Heart right ventricle (tissue), 16 donors: ENCODE measurements at regions of chr5 and their contacts with region 1.

Region 1: GRCh38 chr5:73215891-73216610 is 43.1 kb downstream of the TMEM174 start:
- DNase-seq: peak; percentile 58 to 77
- ATAC-seq: peak; percentile 97 to 99 (median 98)
- H3K4me3 ChIP-seq: peak overlapping the region; percentile 6 to 53 (median 40)
- H3K27ac ChIP-seq: no peak overlapping the region
- H3K4me1 ChIP-seq: peaks cover 0 to 14% (median 9%) of the 10 kb centered on the region in 9 donors
- H3K27me3 ChIP-seq: peaks cover 5 to 99% (median 96%) of the 10 kb centered on the region in 7 donors
- CTCF ChIP-seq: peak; percentile 54 to 88 (median 83)

Region 2: DNA sequence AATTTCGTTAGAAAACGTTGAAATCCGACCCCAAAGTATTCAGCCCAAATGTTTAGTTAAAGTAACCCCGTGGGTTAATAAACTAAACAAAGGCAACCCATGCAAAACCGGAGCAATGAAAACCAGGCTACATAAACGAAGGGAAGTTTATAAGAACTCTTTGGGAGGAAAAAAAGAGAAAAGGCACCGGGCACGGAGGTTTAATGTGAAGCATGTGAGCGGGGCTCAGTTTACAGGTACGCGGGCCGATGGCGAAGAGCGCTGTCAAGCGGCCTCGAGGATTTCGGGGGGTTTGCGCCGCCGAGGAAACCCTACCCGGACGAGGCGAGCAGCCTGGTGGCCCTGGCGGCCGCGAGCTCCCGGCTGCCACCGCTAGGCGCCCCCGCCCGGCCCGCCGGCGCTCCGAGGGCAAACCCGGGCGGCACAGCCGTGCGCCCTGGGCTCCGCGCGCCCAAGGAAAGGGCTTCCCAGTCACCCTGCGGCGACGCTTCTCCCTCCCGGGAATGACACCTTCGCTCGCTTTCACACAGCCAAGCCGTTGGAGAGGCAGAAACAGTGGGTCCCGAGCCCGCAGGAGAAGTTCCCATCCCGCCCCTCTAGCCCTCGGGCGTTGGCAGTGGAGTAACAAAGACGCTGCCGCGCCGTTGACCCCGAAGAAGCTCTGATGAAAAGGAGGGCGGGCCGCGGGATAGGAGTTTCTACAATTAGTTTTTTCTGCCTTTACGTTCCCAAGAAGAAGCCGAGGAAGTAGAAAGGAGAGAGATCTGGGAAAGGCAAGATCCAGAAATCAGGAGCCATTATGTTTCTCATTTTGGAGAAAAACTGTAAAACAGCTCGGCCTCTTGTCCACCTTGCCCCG is 83.0 kb after region 1 on chr5:
- intact Hi-C with region 1: loop called in 1 of 10 experiments (anchors 10 kb)
- DNase-seq: no peak
- ATAC-seq: peak in 1 of 8 donors; percentile 41
- H3K4me3 ChIP-seq: peak overlapping the region in 2 of 10 donors; percentile 10 to 12
- H3K27ac ChIP-seq: no peak overlapping the region
- H3K4me1 ChIP-seq: peaks cover 5 to 31% (median 22%) of the 10 kb centered on the region in 9 donors
- H3K27me3 ChIP-seq: peaks cover 41 to 100% (median 97%) of the 10 kb centered on the region in 7 donors
- CTCF ChIP-seq: peak in 1 of 9 donors; percentile 18

Region 3: DNA sequence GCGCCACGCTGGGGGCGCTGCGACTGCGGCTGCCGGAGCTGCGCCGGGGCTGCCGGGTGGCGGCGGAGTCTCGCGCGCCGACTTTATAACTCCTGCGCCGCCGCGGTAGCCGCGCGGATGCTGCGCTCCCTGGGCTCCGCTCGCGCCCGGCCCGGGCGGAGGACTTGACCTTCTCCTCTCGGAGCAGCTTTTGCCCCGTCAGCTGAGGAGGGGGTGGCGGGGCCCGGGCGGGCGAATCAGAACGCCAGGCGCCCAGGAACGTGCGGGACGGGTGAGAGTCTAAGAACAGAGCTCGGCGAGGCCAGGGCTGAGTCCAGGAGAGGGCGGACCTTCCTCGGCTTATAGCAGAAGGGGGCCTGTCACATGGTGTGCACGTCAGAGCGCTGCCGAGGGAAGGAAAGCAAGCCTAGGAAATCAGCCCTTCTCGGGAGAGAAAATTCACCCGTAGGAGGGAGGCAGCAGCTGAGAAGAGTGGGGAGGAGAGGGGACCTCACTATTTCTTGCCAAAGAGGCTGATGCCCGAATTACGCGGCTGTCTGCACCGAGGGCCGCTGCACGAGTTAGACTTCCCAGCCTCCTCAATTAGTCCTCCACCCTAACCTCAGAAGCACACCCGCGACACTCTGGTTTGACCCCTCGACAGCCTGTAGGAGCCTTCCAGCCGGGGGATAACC is 232.5 kb after region 1 on chr5 and contains the start of gene FOXD1:
- intact Hi-C with region 1: loop called in 8 of 10 experiments (anchors 2 to 10 kb)
- DNase-seq: peak; percentile 45 to 59
- ATAC-seq: peak; percentile 72 to 89 (median 79)
- H3K4me3 ChIP-seq: peak within 1 kb of the TSS; percentile 23 to 64 (median 46)
- H3K27ac ChIP-seq: peak within 1 kb of the TSS in 1 of 10 donors; percentile 50
- H3K4me1 ChIP-seq: peaks cover 7 to 47% (median 19%) of the 10 kb centered on the region in 9 donors
- H3K27me3 ChIP-seq: peaks cover 63 to 94% (median 92%) of the 10 kb centered on the region in 7 donors
- CTCF ChIP-seq: peak in 1 of 9 donors; percentile 5
- total RNA-seq, gene FOXD1: 0.10 to 0.15 (median 0.13) TPM in 4 of 10 donors, not detected in the others

Region 4: DNA sequence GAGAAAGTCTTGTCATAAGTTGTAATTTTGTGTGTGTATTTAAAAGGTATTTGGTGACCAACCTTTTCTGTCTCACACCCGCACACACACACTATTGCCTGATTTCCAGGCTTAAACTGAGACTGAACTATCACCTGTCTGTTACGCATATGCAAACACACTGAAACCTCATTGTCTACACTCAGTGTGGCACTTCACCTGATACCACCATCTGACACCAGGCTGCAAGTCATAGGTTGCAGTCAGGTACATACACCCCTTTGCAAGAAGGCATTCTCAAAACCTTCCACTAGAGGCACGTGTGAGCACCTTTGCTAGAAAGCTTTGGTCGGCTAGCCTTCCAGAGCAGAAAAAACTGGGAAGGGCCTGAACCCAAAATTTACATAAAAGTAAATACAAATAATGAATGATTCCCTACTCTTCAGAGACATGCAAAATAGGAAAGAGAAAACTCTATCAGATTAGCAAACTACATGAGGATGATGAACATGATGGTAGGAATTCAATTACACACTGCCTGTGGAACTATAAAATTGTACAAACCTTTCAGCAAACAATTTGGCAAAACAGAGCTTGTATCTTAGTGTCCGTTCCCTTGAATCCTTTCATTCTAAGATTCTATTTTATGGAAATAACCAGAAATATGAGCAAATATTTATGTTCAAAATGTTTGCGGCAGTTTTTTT is 238.4 kb after region 1 on chr5:
- intact Hi-C with region 1: loop called in 8 of 10 experiments (anchors 2 to 10 kb)
- DNase-seq: no peak
- ATAC-seq: peak in 1 of 8 donors; percentile 59
- H3K4me3 ChIP-seq: no peak overlapping the region
- H3K27ac ChIP-seq: no peak overlapping the region
- H3K4me1 ChIP-seq: peaks cover 3 to 16% (median 8%) of the 10 kb centered on the region in 9 donors
- H3K27me3 ChIP-seq: peaks cover 25 to 97% (median 95%) of the 10 kb centered on the region in 7 donors
- CTCF ChIP-seq: peak; percentile 36 to 76 (median 66)

Region 5: DNA sequence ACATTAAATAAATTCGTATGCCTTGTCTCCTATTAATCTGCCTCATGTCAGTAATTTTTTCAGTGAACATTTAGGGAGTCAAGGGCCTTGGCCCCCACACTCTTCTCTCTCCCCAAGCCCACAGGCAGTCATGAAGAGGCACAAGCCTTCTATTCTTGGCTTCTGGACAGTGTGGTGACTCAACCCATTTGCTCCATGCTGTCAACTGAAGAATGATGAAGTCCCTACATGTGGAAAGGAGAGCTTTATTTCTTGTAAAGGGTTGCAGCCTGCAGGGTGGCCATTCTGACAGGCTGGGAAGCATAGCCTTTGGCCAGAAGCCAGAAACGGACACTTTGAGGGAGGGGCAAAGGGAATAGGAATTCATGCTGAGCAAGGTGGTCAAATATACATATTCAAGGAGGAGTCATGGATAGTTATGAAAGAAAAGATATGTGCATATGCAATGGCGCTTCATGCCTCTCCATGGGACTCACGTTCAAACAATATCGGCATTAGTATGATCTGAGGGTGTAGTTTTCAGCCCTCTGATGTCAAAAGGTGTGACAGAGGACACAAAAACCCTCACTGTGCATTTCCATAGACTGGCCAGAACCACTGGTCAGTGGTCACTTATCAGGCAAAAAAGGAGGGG is 318.1 kb after region 1 on chr5:
- intact Hi-C with region 1: loop called in 1 of 10 experiments (anchors 5 kb)
- DNase-seq: no peak
- ATAC-seq: no peak
- H3K4me3 ChIP-seq: no peak overlapping the region
- H3K27ac ChIP-seq: no peak overlapping the region
- H3K4me1 ChIP-seq: no peaks in the 10 kb centered on the region
- H3K27me3 ChIP-seq: peaks cover 0 to 15% (median 5%) of the 10 kb centered on the region in 7 donors
- CTCF ChIP-seq: no peak